ENCODE measurements at regions of chr4 and their contacts with region 1.

Region 1: GRCh38 chr4:1899149-1900086 is 28.2 kb downstream of the NSD2 start:
- DNase-seq: peak; percentile 83
- ATAC-seq: peak; percentile 95
- H3K4me3 Mint-ChIP-seq: no peak overlapping the region
- H3K27ac Mint-ChIP-seq: peak overlapping the region; percentile 65
- H3K4me1 Mint-ChIP-seq: peaks cover 18% of the 10 kb centered on the region
- H3K27me3 Mint-ChIP-seq: no peaks in the 10 kb centered on the region
- CTCF ChIP-seq: peak; percentile 86

Region 2: GRCh38 chr4:1746265-1746691 is 153.1 kb before region 1 on chr4:
- CTCF ChIA-PET with region 1: interaction called, 28 read pairs
- POLR2A ChIA-PET with region 1: no interaction called
- intact Hi-C with region 1: no loop called
- DNase-seq: peak; percentile 92
- ATAC-seq: peak; percentile 78
- H3K4me3 Mint-ChIP-seq: no peak overlapping the region
- H3K27ac Mint-ChIP-seq: no peak overlapping the region
- H3K4me1 Mint-ChIP-seq: no peaks in the 10 kb centered on the region
- H3K27me3 Mint-ChIP-seq: peaks cover 4% of the 10 kb centered on the region
- CTCF ChIP-seq: peak; percentile 84

Region 3: DNA sequence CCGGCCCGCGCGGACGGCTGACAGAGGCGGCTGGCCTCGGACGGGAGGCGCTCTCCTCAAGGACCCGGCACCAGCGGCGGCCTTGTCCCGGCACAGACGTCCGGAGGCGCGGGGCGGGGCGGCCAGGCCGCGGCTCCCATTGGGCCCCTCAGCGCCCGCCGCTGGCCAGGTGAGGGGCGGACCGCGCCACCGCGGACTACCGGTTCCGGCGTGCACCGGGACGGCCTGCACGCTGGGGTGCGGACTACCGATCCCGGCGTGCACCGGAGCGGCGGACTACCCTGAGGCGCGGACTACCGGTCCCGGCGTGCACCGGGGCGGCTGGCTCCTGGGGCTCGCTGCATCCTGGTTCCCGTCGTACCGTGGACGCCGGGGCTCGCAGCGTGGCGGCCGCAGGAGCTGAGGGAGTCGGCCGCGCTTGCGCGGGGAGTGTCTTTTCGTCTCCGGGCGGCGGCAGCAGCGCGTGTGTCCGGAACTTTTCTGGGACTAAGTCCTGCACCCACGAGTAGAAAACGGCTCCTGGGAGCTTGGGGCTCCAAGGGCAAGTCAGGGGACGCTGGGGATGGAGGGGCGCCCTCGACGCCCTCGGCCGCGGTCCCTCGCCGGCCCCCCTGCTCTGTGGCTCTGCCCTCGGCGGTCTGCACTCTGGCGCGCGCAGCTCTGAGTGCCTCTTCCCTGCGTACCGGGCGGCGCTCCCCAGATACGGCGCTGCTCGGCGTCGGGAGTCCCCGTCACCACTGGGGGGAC is 43.2 kb before region 1 on chr4 and contains the start of gene LETM1:
- CTCF ChIA-PET with region 1: interaction called, 25 read pairs
- POLR2A ChIA-PET with region 1: interaction called, 11 read pairs
- intact Hi-C with region 1: loop called (anchors 10 kb)
- DNase-seq: peak; percentile 95
- ATAC-seq: peak; percentile 97
- H3K4me3 Mint-ChIP-seq: peak within 1 kb of the TSS; percentile 82
- H3K27ac Mint-ChIP-seq: peak within 1 kb of the TSS; percentile 75
- H3K4me1 Mint-ChIP-seq: peaks cover 39% of the 10 kb centered on the region
- H3K27me3 Mint-ChIP-seq: no peaks in the 10 kb centered on the region
- CTCF ChIP-seq: no peak
- total RNA-seq, gene LETM1: 49.4 to 53.2 TPM

Region 4: GRCh38 chr4:1870578-1871443 is 28.6 kb before region 1 on chr4 and contains the start of gene NSD2:
- CTCF ChIA-PET with region 1: interaction called, 29 read pairs
- POLR2A ChIA-PET with region 1: interaction called, 13 read pairs
- intact Hi-C with region 1: no loop called
- DNase-seq: peak; percentile 90
- ATAC-seq: peak; percentile 71
- H3K4me3 Mint-ChIP-seq: peak within 1 kb of the TSS; percentile 99
- H3K27ac Mint-ChIP-seq: peak within 1 kb of the TSS; percentile 99
- H3K4me1 Mint-ChIP-seq: peaks cover 35% of the 10 kb centered on the region
- H3K27me3 Mint-ChIP-seq: no peaks in the 10 kb centered on the region
- CTCF ChIP-seq: no peak
- total RNA-seq, gene NSD2: 219 TPM

Region 5: DNA sequence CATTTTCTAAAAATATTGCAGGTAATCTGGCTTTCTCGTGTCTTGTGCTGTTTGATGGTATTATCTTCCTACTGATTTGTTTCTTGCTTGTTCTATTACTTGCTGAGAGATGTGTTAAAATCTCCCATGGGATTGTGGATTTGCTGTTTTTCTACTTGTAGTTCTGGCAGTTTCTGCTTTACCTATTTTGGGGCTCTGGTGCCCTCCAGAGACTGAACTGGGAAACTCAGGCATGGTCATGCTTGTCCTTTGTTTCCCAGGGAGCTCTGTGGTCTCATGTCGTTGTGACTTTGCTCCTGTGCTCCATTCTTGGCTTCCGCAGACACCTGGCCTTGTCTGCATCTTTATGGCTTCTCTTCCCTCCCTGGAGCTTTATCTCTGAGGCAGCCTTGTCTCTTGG is 11.2 kb after region 1 on chr4:
- CTCF ChIA-PET with region 1: interaction called, 42 read pairs
- POLR2A ChIA-PET with region 1: no interaction called
- intact Hi-C with region 1: no loop called
- DNase-seq: peak; percentile 33
- ATAC-seq: no peak
- H3K4me3 Mint-ChIP-seq: no peak overlapping the region
- H3K27ac Mint-ChIP-seq: no peak overlapping the region
- H3K4me1 Mint-ChIP-seq: peaks cover 19% of the 10 kb centered on the region
- H3K27me3 Mint-ChIP-seq: no peaks in the 10 kb centered on the region
- CTCF ChIP-seq: peak; percentile 40

Region 6: DNA sequence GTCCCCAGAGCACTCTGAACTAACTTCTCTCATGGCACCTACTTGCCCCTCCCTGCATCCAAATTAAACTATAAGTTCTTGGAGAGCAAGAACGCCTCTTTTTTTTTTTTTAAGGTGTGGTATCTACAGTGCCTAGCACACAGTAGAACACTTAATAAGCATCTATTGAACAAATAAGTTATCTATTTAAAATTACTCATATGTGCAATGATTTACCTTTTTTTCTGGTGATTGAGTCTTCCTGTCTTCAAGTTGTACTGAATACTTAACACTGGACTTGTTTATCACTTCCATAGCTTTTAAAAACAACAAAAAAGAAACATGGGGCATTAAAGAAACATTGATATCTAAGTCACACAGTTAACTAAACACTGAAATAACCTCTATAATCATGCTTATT is 313.4 kb after region 1 on chr4:
- CTCF ChIA-PET with region 1: no interaction called
- POLR2A ChIA-PET with region 1: no interaction called
- intact Hi-C with region 1: no loop called
- DNase-seq: no peak
- ATAC-seq: no peak
- H3K4me3 Mint-ChIP-seq: no peak overlapping the region
- H3K27ac Mint-ChIP-seq: no peak overlapping the region
- H3K4me1 Mint-ChIP-seq: no peaks in the 10 kb centered on the region
- H3K27me3 Mint-ChIP-seq: no peaks in the 10 kb centered on the region
- CTCF ChIP-seq: no peak

Measured in activated CD8-positive, alpha-beta T cell treated with anti-CD3 and anti-CD28 coated beads for 36 hours (primary cell).